Caco-2 (cell line): ENCODE measurements at regions of chr2 and their contacts with region 1.

Region 1: DNA sequence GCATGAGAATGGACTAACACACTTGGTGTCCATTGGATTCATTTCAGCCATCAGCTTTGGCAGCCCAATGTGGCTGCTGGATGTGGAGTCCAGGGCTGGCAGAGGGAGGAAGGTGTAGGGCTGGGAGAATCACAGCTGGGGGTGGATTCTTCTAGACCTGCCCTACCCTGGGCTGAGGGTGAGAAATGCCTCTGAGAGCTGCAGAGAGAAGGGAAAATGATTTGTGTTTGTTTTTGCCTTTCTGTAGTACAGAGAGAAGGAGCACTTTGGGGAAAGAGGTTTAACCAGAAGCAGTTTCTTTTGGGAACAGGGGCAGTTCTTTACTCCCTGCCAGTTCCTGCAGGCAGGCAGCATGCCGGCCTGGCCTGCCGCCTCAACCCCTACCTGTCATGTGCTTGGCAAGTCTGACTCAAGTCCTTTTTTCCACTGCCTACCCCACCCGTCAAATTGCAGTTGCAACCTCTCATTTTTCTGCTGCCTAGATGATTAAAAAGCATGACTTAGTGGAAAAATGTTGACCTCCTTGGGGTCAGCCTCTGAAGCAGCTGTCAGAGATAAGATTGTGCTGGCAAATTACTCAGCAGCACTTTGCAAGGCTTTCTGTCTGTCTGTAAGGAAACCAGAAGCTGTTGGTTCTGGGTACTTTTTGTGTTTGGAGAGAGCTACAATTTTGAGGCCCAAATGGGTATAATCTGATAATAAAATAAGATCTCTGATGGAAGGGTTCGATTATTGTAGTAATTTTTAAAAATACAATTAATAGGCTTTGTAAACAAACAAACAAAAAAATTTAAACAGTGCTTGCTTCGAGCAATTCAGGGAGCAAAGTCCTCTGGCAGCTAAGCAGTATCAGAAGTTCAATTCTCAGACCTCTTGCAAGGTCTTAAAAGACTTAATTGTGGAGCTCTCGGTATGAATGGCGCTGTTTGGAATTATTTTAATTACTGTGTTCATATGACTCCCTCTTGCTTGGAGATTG is 21.7 kb downstream of the LBH start:
- DNase-seq: peak; percentile 81 to 84
- H3K4me3 ChIP-seq: no peak overlapping the region
- H3K4me3 Mint-ChIP-seq: peak overlapping the region; percentile 64
- H3K27ac Mint-ChIP-seq: peak overlapping the region; percentile 82
- H3K4me1 ChIP-seq: peaks cover 46% of the 10 kb centered on the region
- H3K4me1 Mint-ChIP-seq: peaks cover 40% of the 10 kb centered on the region
- H3K27me3 ChIP-seq: no peaks in the 10 kb centered on the region
- H3K27me3 Mint-ChIP-seq: no peaks in the 10 kb centered on the region
- CTCF ChIP-seq: no peak

Region 2: GRCh38 chr2:30239308-30239985 is 13.6 kb before region 1 on chr2:
- CTCF ChIA-PET with region 1: interaction called, 4 read pairs
- POLR2A ChIA-PET with region 1: no interaction called
- intact Hi-C with region 1: loop called (anchors 2 kb)
- DNase-seq: peak; percentile 79 to 86
- H3K4me3 ChIP-seq: no peak overlapping the region
- H3K4me3 Mint-ChIP-seq: no peak overlapping the region
- H3K27ac Mint-ChIP-seq: peak overlapping the region; percentile 48
- H3K4me1 ChIP-seq: peaks cover 7% of the 10 kb centered on the region; the same call in 1 of the 2 replicates
- H3K4me1 Mint-ChIP-seq: peaks cover 11% of the 10 kb centered on the region
- H3K27me3 ChIP-seq: no peaks in the 10 kb centered on the region
- H3K27me3 Mint-ChIP-seq: no peaks in the 10 kb centered on the region
- CTCF ChIP-seq: peak; percentile 79 to 95

Region 3: GRCh38 chr2:30300456-30301221 is 47.6 kb after region 1 on chr2:
- CTCF ChIA-PET with region 1: no interaction called
- POLR2A ChIA-PET with region 1: no interaction called
- intact Hi-C with region 1: loop called (anchors 1 kb)
- DNase-seq: peak; percentile 48 to 56
- H3K4me3 ChIP-seq: no peak overlapping the region
- H3K4me3 Mint-ChIP-seq: no peak overlapping the region
- H3K27ac Mint-ChIP-seq: peak overlapping the region; percentile 39
- H3K4me1 ChIP-seq: peaks cover 19% of the 10 kb centered on the region
- H3K4me1 Mint-ChIP-seq: peaks cover 13% of the 10 kb centered on the region
- H3K27me3 ChIP-seq: no peaks in the 10 kb centered on the region
- H3K27me3 Mint-ChIP-seq: no peaks in the 10 kb centered on the region
- CTCF ChIP-seq: no peak